ENCODE measurements at regions of chr9 and their contacts with region 1.

Region 1: GRCh38 chr9:75866273-75866871 is 24.1 kb upstream of the PCSK5 start:
- DNase-seq: peak in 8 of 9 experiments; percentile 8 to 62 (median 28)
- ATAC-seq: no peak
- H3K4me3 ChIP-seq: no peak overlapping the region
- H3K4me3 Mint-ChIP-seq: no peak overlapping the region
- H3K27ac ChIP-seq: no peak overlapping the region
- H3K27ac Mint-ChIP-seq: no peak overlapping the region
- H3K4me1 ChIP-seq: peaks cover 20% of the 10 kb centered on the region
- H3K4me1 Mint-ChIP-seq: peaks cover 26% of the 10 kb centered on the region
- H3K27me3 ChIP-seq: peaks cover 0 to 2% of the 10 kb centered on the region in 2 experiments
- H3K27me3 Mint-ChIP-seq: no peaks in the 10 kb centered on the region
- CTCF ChIP-seq: peak; percentile 73

Region 2: DNA sequence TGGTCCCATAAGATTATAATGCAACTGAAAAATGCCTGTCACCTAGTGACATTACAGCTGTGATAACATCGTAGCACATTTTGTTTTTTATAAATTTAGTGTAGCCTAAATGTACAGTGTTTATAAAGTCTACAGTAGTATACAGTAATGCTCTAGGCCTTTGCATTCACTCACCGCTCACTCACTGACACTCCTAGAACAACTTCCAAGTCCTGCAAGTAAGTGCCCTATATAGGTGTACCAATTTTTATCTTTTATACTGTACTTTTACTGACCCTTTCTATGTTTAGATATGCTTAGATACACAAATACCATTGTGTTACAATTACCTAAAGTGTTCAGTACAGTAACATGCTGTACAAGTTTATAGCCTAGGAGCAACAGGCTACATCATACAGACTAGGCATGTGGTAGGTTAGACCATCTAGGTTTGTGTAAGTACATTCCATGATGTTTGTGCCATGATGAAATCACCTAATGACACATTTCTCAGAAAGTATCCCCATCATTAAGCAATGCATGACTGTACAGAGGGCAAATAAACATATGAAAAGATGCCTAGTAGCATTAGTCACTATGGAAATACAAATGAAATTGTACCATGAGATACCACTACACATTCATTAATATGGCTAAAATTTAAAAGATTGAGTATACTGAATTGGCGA is 1106.2 kb before region 1 on chr9:
- CTCF ChIA-PET with region 1: no interaction called
- POLR2A ChIA-PET with region 1: no interaction called
- intact Hi-C with region 1: loop called (anchors 5 to 10 kb)
- DNase-seq: no peak
- ATAC-seq: no peak
- H3K4me3 ChIP-seq: no peak overlapping the region
- H3K4me3 Mint-ChIP-seq: no peak overlapping the region
- H3K27ac ChIP-seq: no peak overlapping the region
- H3K27ac Mint-ChIP-seq: no peak overlapping the region
- H3K4me1 ChIP-seq: no peaks in the 10 kb centered on the region
- H3K4me1 Mint-ChIP-seq: no peaks in the 10 kb centered on the region
- H3K27me3 ChIP-seq: no peaks in the 10 kb centered on the region
- H3K27me3 Mint-ChIP-seq: no peaks in the 10 kb centered on the region
- CTCF ChIP-seq: no peak

Region 3: DNA sequence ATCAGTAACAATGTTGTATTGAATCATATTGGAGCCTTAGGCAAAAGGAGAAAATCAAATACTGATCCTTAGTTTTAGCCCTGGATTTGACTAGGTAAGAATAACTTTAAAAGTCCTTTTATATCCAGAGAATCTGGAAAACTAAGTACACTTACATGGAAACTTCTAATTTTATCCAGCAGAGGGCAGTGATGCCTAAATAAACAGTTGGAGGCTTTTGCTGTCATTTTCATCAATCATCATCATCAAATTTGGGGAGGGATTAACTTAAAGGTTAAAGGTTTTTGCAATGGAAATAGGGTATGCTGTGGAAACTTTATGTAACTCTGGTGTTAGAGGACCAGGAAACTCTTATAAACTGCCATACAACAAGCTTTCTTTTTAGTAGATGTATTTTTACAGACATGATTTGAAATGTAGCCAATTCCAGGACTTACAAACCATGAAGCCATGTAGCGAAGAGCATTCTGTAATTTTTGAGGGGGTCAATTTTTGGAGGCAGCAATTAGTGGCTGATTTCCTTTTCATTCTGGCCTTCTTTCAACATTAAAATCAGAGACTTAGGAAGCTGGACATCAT is 665.4 kb before region 1 on chr9:
- CTCF ChIA-PET with region 1: interaction called, 4 read pairs
- POLR2A ChIA-PET with region 1: no interaction called
- intact Hi-C with region 1: loop called in 1 of 2 experiments (anchors 10 kb)
- DNase-seq: peak in 2 of 9 experiments; percentile 54 to 62
- ATAC-seq: no peak
- H3K4me3 ChIP-seq: no peak overlapping the region
- H3K4me3 Mint-ChIP-seq: no peak overlapping the region
- H3K27ac ChIP-seq: no peak overlapping the region
- H3K27ac Mint-ChIP-seq: no peak overlapping the region
- H3K4me1 ChIP-seq: no peaks in the 10 kb centered on the region
- H3K4me1 Mint-ChIP-seq: no peaks in the 10 kb centered on the region
- H3K27me3 ChIP-seq: no peaks in the 10 kb centered on the region
- H3K27me3 Mint-ChIP-seq: no peaks in the 10 kb centered on the region
- CTCF ChIP-seq: peak; percentile 65

Region 4: DNA sequence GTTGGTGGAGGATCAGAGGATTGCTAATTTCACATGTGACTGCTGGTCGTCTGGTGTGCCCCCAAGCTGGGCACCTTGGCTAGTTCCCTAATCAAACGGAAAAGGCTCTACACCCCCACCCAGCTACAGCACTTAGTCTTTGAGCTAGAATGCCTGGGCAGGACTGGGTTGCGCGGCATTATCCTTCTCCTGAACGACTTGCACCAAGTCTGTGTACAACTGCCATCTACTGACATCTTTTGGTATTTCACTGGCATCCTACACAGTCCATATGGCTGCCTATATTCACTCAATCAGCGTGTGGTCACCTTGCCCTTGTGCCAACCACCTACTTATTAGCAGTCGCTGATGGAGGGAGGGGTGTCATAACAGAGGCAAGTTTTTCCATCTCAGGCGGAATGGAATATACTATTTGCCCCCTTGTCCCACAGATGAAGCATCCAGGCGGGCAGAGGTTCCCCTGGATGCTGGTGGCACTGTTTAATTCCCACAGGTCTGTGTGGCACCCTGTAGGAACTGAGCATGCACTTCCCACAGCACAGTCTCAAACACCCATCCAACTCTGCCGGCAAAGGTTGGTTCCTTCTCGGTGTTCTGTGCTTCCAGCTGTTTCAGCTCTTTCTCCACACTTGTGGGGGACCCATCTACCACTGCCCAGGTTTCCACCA is 627.9 kb before region 1 on chr9:
- CTCF ChIA-PET with region 1: no interaction called
- POLR2A ChIA-PET with region 1: no interaction called
- intact Hi-C with region 1: no loop called
- DNase-seq: peak in 7 of 9 experiments; percentile 1 to 70 (median 27)
- ATAC-seq: peak; percentile 93
- H3K4me3 ChIP-seq: no peak overlapping the region
- H3K4me3 Mint-ChIP-seq: no peak overlapping the region
- H3K27ac ChIP-seq: no peak overlapping the region
- H3K27ac Mint-ChIP-seq: no peak overlapping the region
- H3K4me1 ChIP-seq: no peaks in the 10 kb centered on the region
- H3K4me1 Mint-ChIP-seq: no peaks in the 10 kb centered on the region
- H3K27me3 ChIP-seq: no peaks in the 10 kb centered on the region
- H3K27me3 Mint-ChIP-seq: no peaks in the 10 kb centered on the region
- CTCF ChIP-seq: peak; percentile 62

Region 5: DNA sequence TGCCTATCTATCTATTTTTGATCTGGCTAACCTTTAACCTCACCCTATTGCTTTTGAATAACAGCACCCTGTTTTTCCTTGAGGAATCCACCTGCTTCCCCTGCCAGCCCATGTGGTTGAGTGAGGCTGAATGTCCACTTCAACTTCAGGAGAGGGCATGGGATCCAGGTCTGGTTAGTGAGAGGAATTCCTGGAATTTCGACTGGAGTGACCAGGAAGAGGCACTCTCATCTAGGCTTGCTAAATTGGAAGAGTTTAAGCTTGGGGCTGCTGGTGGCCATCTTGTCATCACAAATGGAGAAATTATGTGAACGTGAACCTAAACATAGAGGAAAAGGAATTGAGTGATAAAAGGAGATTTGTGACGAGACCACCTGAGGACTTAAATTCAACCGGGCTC is 456.0 kb before region 1 on chr9:
- CTCF ChIA-PET with region 1: no interaction called
- POLR2A ChIA-PET with region 1: no interaction called
- intact Hi-C with region 1: no loop called
- DNase-seq: no peak
- ATAC-seq: no peak
- H3K4me3 ChIP-seq: no peak overlapping the region
- H3K4me3 Mint-ChIP-seq: no peak overlapping the region
- H3K27ac ChIP-seq: no peak overlapping the region
- H3K27ac Mint-ChIP-seq: no peak overlapping the region
- H3K4me1 ChIP-seq: no peaks in the 10 kb centered on the region
- H3K4me1 Mint-ChIP-seq: no peaks in the 10 kb centered on the region
- H3K27me3 ChIP-seq: no peaks in the 10 kb centered on the region
- H3K27me3 Mint-ChIP-seq: peaks cover 13% of the 10 kb centered on the region
- CTCF ChIP-seq: no peak

Region 6: GRCh38 chr9:75847085-75847484 is 19.3 kb before region 1 on chr9:
- CTCF ChIA-PET with region 1: interaction called, 14 read pairs
- POLR2A ChIA-PET with region 1: no interaction called
- intact Hi-C with region 1: no loop called
- DNase-seq: no peak
- ATAC-seq: no peak
- H3K4me3 ChIP-seq: no peak overlapping the region
- H3K4me3 Mint-ChIP-seq: no peak overlapping the region
- H3K27ac ChIP-seq: no peak overlapping the region
- H3K27ac Mint-ChIP-seq: no peak overlapping the region
- H3K4me1 ChIP-seq: no peaks in the 10 kb centered on the region
- H3K4me1 Mint-ChIP-seq: no peaks in the 10 kb centered on the region
- H3K27me3 ChIP-seq: no peaks in the 10 kb centered on the region
- H3K27me3 Mint-ChIP-seq: no peaks in the 10 kb centered on the region
- CTCF ChIP-seq: no peak

Region 7: GRCh38 chr9:76090330-76090729 is 224.0 kb after region 1 on chr9:
- CTCF ChIA-PET with region 1: no interaction called
- POLR2A ChIA-PET with region 1: no interaction called
- intact Hi-C with region 1: loop called in 1 of 2 experiments (anchors 1 kb)
- DNase-seq: no peak
- ATAC-seq: no peak
- H3K4me3 ChIP-seq: no peak overlapping the region
- H3K4me3 Mint-ChIP-seq: no peak overlapping the region
- H3K27ac ChIP-seq: no peak overlapping the region
- H3K27ac Mint-ChIP-seq: no peak overlapping the region
- H3K4me1 ChIP-seq: no peaks in the 10 kb centered on the region
- H3K4me1 Mint-ChIP-seq: peaks cover 1% of the 10 kb centered on the region
- H3K27me3 ChIP-seq: no peaks in the 10 kb centered on the region
- H3K27me3 Mint-ChIP-seq: no peaks in the 10 kb centered on the region
- CTCF ChIP-seq: no peak

Region 8: DNA sequence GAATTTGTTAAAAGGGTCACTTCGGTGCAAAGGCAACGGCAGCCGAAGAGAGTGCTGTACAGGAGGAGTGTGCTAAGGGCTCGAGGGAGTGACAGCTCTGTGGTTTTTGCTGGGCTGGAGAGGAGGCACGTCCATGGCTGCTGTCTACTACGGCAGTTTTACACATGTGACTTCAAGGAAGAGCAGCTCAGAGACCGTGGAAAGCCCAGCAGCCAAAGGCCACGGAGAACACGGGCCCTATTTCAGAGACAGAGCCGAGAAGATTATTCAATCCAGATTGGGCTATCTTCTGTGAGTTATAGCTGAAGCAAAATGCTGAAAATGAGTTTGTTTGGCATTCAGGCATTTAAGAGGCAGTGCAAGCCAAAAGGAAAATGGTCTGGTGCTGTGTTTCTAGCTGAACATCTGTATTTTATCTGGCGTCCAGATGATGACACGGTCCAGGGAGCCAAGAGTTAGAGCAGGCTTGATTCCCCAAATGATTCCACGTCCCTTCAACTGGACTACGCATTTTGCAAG is 431.4 kb after region 1 on chr9:
- CTCF ChIA-PET with region 1: interaction called, 12 read pairs
- POLR2A ChIA-PET with region 1: no interaction called
- intact Hi-C with region 1: loop called (anchors 2 to 5 kb)
- DNase-seq: peak in 1 of 9 experiments; percentile 4
- ATAC-seq: no peak
- H3K4me3 ChIP-seq: no peak overlapping the region
- H3K4me3 Mint-ChIP-seq: no peak overlapping the region
- H3K27ac ChIP-seq: no peak overlapping the region
- H3K27ac Mint-ChIP-seq: no peak overlapping the region
- H3K4me1 ChIP-seq: no peaks in the 10 kb centered on the region
- H3K4me1 Mint-ChIP-seq: no peaks in the 10 kb centered on the region
- H3K27me3 ChIP-seq: no peaks in the 10 kb centered on the region
- H3K27me3 Mint-ChIP-seq: no peaks in the 10 kb centered on the region
- CTCF ChIP-seq: no peak

Measured in CD8-positive, alpha-beta T cell (primary cell).